ENCODE measurements at regions of chr11 and their contacts with region 1.

Region 1: DNA sequence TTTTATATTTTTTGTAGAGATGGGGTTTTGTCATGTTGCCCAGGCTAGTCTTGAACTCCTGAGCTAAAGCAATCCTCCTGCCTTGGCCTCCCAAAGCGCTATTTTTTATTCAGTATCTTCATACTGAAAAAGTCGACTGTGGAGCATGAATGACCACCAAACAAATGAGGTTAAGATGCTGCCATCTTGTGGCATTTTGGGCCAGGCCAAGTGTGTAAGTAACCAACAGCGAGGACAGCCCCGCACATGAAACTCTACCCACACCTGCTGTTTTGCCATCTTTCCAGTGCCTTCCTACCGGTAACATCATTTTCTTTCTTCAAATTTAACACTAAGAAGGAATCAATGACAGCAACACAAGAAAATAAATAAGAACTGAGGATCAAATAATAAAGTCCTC is 32.2 kb upstream of the AQP11 start:
- DNase-seq: no peak
- H3K4me3 ChIP-seq: no peak overlapping the region
- H3K27ac ChIP-seq: no peak overlapping the region
- H3K4me1 ChIP-seq: peaks cover 6% of the 10 kb centered on the region
- H3K27me3 ChIP-seq: no peaks in the 10 kb centered on the region
- CTCF ChIP-seq: no peak
- POLR2A ChIP-seq: no peak

Region 2: DNA sequence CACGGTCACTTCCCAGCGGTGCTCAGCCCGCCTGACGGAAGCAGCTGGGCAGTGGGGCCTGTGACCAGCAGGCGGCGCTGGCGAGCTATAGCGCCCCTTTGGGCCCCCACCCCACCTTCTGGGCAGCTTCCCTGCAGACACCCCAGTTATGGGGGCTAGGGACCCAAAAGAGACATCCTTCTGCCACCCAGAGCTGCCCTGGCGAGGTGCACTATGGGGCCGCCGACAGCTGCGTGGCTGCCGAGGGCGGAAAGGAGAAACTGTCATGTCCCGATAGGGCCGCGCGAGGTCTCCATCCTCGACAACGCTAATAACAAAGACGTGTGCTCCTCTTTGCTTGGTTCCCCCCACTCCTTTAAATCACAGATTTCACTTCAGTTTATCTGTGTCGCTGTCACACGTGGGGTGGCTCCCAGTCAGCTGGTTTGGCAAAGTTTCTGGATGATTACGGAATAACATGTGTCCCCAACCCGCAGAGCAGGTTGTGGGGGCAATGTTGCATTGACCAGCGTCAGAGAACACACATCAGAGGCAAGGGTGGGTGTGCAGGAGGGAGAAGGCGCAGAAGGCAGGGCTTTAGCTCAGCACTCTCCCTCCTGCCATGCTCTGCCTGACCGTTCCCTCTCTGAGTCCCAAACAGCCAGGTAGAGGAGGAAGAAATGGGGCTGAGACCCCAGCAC is 430.2 kb before region 1 on chr11:
- intact Hi-C with region 1: loop called (anchors 10 kb)
- DNase-seq: no peak
- H3K4me3 ChIP-seq: peak overlapping the region; percentile 30 to 47
- H3K27ac ChIP-seq: no peak overlapping the region
- H3K4me1 ChIP-seq: peaks cover 26% of the 10 kb centered on the region
- H3K27me3 ChIP-seq: no peaks in the 10 kb centered on the region
- CTCF ChIP-seq: peak; percentile 96 to 99 (median 98)
- POLR2A ChIP-seq: no peak

Region 3: DNA sequence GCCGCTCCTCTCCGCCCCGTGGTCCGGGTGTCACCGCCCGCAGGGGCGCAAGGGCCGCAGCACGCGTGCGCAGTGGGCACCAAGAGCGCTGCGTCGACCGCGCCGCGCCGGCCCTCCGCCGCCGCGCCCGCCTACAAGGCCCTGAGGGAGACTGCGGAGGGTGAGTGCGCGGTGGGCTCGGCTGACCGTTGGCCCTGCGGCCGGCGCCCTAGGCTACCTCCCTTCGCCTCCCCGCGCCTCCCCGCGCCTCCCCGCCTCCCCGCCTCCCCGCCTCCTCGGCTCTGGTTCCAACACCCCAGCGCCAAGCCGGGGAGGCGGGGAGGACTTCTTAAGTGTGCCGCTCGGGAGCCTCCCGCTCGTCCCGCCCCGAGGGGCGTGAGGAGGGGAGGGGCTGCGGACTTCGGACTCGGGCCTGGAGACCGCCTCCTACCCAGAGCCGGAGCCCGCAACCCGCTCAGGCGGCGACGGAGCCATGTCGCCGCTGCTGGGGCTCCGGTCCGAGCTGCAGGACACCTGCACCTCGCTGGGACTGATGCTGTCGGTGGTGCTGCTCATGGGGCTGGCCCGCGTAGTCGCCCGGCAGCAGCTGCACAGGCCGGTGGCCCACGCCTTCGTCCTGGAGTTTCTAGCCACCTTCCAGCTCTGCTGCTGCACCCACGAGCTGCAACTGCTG is 32.1 kb after region 1 on chr11 and contains the start of gene AQP11:
- intact Hi-C with region 1: no loop called
- DNase-seq: no peak
- H3K4me3 ChIP-seq: peak within 1 kb of the TSS; percentile 60 to 76
- H3K27ac ChIP-seq: peak within 1 kb of the TSS; percentile 82
- H3K4me1 ChIP-seq: no peaks in the 10 kb centered on the region
- H3K27me3 ChIP-seq: no peaks in the 10 kb centered on the region
- CTCF ChIP-seq: no peak
- POLR2A ChIP-seq: no peak
- total RNA-seq, gene AQP11: 1.7 TPM

Region 4: GRCh38 chr11:77705195-77705876 is 147.8 kb after region 1 on chr11:
- intact Hi-C with region 1: no loop called
- DNase-seq: no peak
- H3K4me3 ChIP-seq: no peak overlapping the region
- H3K27ac ChIP-seq: no peak overlapping the region
- H3K4me1 ChIP-seq: no peaks in the 10 kb centered on the region
- H3K27me3 ChIP-seq: no peaks in the 10 kb centered on the region
- CTCF ChIP-seq: no peak
- POLR2A ChIP-seq: no peak

Measured in vagina (tissue), 2 donors.